ENCODE measurements at regions of chr9 and their contacts with region 1.

Region 1: DNA sequence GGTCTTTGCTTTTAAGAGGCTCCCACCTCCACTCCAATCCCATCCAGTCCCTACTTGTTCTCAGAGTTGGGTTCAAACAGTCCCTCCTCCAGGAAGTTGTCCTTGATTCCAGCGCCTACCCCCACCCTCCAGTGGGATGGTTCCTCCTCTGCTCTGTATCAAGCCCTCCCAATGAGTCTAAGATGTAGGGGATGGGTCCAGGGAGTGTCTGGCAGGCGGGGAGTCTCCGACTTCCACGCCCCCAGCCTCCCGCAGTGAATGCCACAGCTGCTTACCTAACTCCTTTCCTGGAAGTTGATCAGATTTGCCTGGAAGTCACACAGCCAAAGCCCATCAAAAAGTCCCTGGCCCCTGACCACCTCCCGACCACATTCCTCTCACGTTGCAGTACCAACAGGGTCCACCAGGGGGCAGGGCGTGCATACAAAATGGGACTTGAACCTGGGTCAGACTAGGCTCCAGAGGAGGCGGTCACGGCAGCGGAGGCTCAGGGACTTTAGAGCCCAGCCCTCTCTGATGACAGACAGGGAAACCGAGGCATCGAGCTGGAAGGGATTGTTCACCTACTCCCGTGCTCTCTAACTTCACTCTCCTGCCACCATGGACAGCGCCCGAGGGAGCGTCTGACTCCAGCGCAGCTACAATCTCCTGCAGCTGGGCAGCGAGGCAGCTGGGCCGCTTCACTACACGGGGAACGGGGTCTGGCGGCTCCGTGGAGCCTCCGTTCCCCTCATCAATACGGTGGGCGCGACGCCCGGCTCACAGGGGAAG is 25.0 kb upstream of the TDRD7 start:
- DNase-seq: peak; percentile 47 to 77
- ATAC-seq: peak in 1 of 2 experiments; percentile 84; a peak in 3 of 6 replicates
- H3K4me3 ChIP-seq: no peak overlapping the region
- H3K27ac ChIP-seq: no peak overlapping the region
- H3K4me1 ChIP-seq: peaks cover 30% of the 10 kb centered on the region
- CTCF ChIP-seq: peak; percentile 83
- EP300 ChIP-seq: no peak
- POLR2A ChIP-seq: no peak
- RAD21 ChIP-seq: peak; percentile 79 to 92

Region 2: DNA sequence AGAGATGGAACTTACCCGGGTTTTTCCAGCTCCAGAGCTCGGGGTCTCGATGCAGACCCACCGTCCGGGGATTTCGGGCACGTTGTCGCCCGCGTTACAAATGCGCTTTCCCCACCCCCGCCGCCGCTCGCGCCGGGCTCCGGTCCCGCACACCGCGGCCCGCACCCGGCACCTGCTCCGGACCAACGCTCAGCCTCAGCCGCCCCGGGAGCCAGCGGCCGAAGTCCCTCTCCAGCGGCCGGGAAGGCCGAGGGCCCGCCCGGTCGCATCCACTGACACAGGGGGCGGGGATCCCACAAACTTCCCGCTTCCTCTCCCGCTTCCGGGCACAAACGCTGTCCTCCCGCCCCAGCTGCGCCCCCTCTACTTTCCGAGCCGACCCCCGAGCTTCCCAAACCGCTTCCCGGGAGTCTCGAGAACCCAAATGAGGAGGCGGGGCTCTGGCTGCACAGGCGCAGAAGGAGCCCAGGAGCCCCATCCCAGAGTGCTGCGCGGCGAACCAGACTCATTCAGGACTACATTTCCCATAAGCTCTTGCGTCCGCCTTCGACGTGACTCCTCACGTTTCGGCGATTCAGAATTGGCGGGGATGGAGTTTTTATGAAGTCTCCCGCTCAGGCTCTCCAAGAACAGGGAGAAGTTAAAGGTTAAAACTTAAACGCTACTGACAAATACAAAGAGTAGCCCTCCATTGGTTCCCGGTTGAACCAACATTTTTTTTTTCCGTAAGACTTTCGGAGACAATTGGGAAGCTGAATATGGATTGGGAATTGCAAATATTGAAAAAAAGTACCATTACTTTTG is 532.6 kb before region 1 on chr9 and contains the start of gene ZNF782:
- CTCF ChIA-PET with region 1: interaction called, 23 read pairs
- POLR2A ChIA-PET with region 1: no interaction called
- DNase-seq: peak; percentile 83 to 95
- ATAC-seq: peak; percentile 94 to 99
- H3K4me3 ChIP-seq: peak within 1 kb of the TSS; percentile 65
- H3K27ac ChIP-seq: peak within 1 kb of the TSS; percentile 69 to 89
- H3K4me1 ChIP-seq: no peaks in the 10 kb centered on the region; the same call in 2 of the 3 replicates
- CTCF ChIP-seq: no peak
- EP300 ChIP-seq: no peak
- POLR2A ChIP-seq: peak; percentile 65
- RAD21 ChIP-seq: no peak
- polyA plus RNA-seq, gene ZNF782: 2.1 and 2.7 TPM in 2 replicates

Region 3: DNA sequence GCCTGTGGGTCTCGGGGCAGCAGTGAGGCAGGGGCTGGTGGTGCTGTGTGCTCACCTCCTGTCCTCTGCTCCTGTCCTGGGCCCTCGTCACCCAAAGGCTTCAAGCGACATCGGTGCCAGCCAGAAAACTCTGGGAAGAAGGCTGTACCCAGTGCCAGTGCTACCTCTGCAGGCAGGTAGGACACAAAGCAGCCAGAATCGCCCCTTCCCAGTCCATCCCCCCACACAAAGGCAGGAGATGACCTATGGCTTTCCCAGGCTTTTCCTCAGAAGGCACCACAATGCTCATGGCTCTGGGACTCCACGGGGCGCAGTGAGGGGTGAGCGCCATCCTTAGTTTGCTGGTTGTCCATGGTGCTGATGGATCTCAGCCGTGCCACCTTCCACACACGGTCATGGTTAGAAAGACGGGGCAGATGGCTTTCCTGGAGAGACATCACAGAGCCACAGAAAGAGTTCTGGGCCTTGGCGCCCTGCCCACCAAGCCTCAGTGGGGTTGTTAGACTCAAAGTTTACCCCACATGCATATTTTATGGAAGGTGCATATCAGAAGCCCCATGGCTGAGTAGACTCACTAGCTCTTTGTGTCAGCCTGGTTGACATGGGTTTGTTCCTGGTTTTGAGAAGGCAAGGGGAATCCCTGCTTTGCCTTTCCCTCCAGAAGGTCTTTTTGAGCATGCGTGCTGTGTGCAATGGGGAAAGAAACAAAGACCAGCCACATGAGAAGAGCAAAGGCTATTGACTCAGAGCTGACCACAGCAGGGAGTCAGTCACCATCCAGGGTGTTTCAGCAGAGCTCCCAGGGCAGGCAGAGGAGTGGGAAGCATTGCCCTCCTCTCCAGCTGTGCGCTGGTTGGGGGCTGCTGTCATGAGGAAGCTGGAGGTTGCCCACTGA is 24.4 kb before region 1 on chr9:
- CTCF ChIA-PET with region 1: interaction called, 18 read pairs
- POLR2A ChIA-PET with region 1: no interaction called
- DNase-seq: no peak
- ATAC-seq: no peak
- H3K4me3 ChIP-seq: no peak overlapping the region
- H3K27ac ChIP-seq: no peak overlapping the region
- H3K4me1 ChIP-seq: no peaks in the 10 kb centered on the region
- CTCF ChIP-seq: no peak
- EP300 ChIP-seq: no peak
- POLR2A ChIP-seq: no peak
- RAD21 ChIP-seq: no peak

Region 4: DNA sequence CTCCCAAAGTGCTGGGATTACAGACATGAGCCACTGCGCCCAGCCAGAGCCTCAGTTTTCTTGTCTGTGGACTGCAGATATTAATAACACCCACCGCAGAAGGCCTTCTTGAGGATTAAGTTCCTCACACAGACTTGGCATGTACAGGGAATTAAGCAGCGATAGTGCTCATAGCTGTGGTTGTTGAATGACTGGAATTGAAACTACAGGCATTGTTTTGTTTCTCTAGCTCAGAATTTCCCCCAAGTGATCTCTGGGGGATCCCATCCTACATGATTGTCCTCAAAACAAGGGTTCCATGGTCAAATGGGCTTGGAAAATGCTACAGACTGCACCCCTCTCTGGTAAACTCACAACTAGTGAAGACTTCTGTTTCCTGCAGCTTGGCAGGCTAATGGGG is 19.2 kb before region 1 on chr9:
- CTCF ChIA-PET with region 1: interaction called, 18 read pairs
- POLR2A ChIA-PET with region 1: no interaction called
- DNase-seq: no peak
- ATAC-seq: no peak
- H3K4me3 ChIP-seq: no peak overlapping the region
- H3K27ac ChIP-seq: no peak overlapping the region
- H3K4me1 ChIP-seq: no peaks in the 10 kb centered on the region
- CTCF ChIP-seq: no peak
- EP300 ChIP-seq: no peak
- POLR2A ChIP-seq: no peak
- RAD21 ChIP-seq: no peak

Region 5: GRCh38 chr9:97373331-97373730 is 13.6 kb before region 1 on chr9:
- CTCF ChIA-PET with region 1: interaction called, 46 read pairs
- POLR2A ChIA-PET with region 1: no interaction called
- DNase-seq: no peak
- ATAC-seq: no peak
- H3K4me3 ChIP-seq: no peak overlapping the region
- H3K27ac ChIP-seq: no peak overlapping the region
- H3K4me1 ChIP-seq: no peaks in the 10 kb centered on the region
- CTCF ChIP-seq: no peak
- EP300 ChIP-seq: no peak
- POLR2A ChIP-seq: no peak
- RAD21 ChIP-seq: no peak

Region 6: GRCh38 chr9:97398999-97399758 is 12.3 kb after region 1 on chr9:
- CTCF ChIA-PET with region 1: interaction called, 44 read pairs
- POLR2A ChIA-PET with region 1: no interaction called
- DNase-seq: peak; percentile 85
- ATAC-seq: peak; percentile 85 to 93
- H3K4me3 ChIP-seq: no peak overlapping the region
- H3K27ac ChIP-seq: peak overlapping the region in 1 of 2 experiments; percentile 59; a peak in 3 of 6 replicates
- H3K4me1 ChIP-seq: peaks cover 10% of the 10 kb centered on the region
- CTCF ChIP-seq: peak; percentile 72
- EP300 ChIP-seq: no peak
- POLR2A ChIP-seq: no peak
- RAD21 ChIP-seq: peak; percentile 80 to 84

Region 7: DNA sequence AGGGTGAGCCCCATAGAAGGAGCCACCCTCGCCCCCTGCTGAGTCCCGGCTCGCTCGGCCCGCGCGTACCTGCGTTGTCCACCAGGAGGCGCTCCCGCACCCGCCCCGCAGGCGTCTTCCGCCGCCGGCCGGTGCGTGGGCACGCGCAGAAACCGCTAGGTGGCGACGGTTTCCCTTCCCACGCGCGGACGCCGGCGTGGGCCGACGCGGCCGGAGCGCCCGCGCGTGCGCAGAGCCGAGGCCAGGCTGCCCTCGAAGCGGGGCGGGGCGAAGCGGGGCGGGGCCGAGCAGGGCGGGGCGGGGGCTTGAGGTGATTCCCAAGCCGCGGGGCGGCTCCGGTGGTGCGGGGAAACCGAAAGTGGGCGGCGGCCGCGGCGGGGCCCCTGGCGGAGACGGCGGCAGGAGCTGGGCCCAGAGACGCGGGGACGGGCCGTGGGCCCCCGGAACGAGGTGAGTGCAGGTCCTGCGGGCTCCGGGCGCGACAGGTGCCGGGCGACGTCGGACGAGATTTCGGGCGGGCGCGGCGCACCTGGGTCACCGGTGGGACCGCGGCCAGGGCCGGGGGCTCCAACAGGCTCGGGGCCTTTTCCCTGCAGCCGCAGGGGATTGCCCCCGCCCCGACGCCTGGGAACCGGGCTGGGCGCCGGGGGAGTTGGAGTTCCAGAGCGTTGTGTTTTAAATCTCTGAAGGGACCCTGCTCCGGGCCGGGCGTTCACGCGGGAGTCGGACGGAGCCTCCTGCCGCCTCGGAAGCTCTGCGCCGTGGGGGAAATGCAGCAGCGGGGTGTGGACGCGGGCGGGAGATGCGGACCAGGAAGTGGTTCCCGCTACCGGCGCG is 25.1 kb after region 1 on chr9 and contains the start of gene TDRD7:
- CTCF ChIA-PET with region 1: interaction called, 39 read pairs
- POLR2A ChIA-PET with region 1: no interaction called
- DNase-seq: peak; percentile 76 to 83
- ATAC-seq: peak; percentile 86 to 90
- H3K4me3 ChIP-seq: peak within 1 kb of the TSS; percentile 100
- H3K27ac ChIP-seq: peak within 1 kb of the TSS; percentile 88 to 93
- H3K4me1 ChIP-seq: peaks cover 9% of the 10 kb centered on the region; the same call in 2 of the 3 replicates
- CTCF ChIP-seq: peak; percentile 99
- EP300 ChIP-seq: no peak
- POLR2A ChIP-seq: no peak
- RAD21 ChIP-seq: peak; percentile 60 to 83
- polyA plus RNA-seq, gene TDRD7: 15.7 and 18.3 TPM in 2 replicates

Measured in A549 (cell line).